Stomach (tissue), 19 donors: ENCODE measurements at regions of chr18 and their contacts with region 1.

Region 1: GRCh38 chr18:34661464-34662111 is 48.5 kb upstream of the DTNA start:
- DNase-seq: peak in 1 of 2 donors; percentile 61
- H3K4me3 ChIP-seq: no peak overlapping the region
- H3K27ac ChIP-seq: peak overlapping the region in 2 of 5 donors; percentile 4 to 74
- H3K4me1 ChIP-seq: peaks cover 4 to 26% (median 18%) of the 10 kb centered on the region in 4 donors
- H3K27me3 ChIP-seq: no peaks in the 10 kb centered on the region
- CTCF ChIP-seq: peak in 5 of 7 experiments; percentile 54 to 82 (median 60)
- EP300 ChIP-seq: no peak
- POLR2A ChIP-seq: no peak

Region 2: DNA sequence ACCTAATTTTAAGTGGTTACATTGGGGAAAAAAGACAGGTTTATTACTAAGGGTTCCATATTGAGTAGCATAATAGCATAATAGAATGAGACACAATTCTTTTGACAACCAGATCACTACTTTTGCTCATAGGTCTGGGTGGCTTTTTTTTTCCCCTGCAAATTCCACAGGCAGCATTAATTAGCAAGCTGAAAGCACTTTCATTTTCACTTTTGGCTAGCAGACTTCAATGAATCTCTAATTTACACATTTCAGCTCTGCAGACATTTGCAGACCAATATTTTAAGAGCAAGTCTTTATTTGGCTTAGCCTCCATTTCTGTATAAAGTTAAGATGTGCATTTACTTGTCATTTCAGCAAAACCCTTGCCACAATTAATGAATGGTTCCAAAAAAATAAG is 622.4 kb before region 1 on chr18:
- intact Hi-C with region 1: no loop called
- DNase-seq: peak in 1 of 2 donors; percentile 26
- H3K4me3 ChIP-seq: peak overlapping the region in 1 of 4 donors; percentile 9
- H3K27ac ChIP-seq: no peak overlapping the region
- H3K4me1 ChIP-seq: peaks cover 0 to 4% (median 0%) of the 10 kb centered on the region in 4 donors
- H3K27me3 ChIP-seq: no peaks in the 10 kb centered on the region
- CTCF ChIP-seq: no peak
- EP300 ChIP-seq: no peak
- POLR2A ChIP-seq: no peak

Region 3: GRCh38 chr18:34600118-34600517 is 61.5 kb before region 1 on chr18:
- intact Hi-C with region 1: no loop called
- DNase-seq: no peak
- H3K4me3 ChIP-seq: no peak overlapping the region
- H3K27ac ChIP-seq: no peak overlapping the region
- H3K4me1 ChIP-seq: peaks cover 0 to 5% (median 0%) of the 10 kb centered on the region in 4 donors
- H3K27me3 ChIP-seq: no peaks in the 10 kb centered on the region
- CTCF ChIP-seq: no peak
- EP300 ChIP-seq: no peak
- POLR2A ChIP-seq: no peak

Region 4: DNA sequence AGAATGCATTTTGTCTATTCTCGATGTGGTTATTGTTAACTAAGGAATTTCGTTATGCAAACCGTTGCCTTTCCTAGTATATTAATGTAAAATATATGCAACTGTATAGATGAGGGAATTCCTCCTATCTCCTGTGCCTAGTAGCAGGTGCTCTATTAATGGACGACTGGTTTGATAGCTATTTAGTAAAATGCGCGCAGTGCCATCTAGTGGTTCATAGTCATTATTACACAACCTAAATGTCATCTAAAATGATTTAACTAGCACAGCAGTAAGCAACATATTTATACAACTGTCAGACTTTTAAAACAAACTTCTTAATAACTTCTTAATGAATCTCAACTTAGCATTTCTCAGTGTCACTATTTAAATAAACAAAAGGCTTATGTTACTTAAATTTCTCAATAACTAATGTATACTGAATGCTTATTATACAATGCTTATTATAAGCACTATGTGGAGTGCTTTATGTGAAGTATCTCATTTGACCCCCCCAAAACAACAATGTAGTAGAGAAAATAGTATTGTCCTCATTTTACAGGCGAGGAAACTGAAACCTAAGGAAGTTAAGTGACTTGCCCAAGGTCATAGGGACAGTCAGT is 126.4 kb after region 1 on chr18:
- intact Hi-C with region 1: loop called (anchors 10 kb)
- DNase-seq: peak; percentile 41 to 84
- H3K4me3 ChIP-seq: no peak overlapping the region
- H3K27ac ChIP-seq: no peak overlapping the region
- H3K4me1 ChIP-seq: no peaks in the 10 kb centered on the region
- H3K27me3 ChIP-seq: no peaks in the 10 kb centered on the region
- CTCF ChIP-seq: peak in 5 of 7 experiments; percentile 58 to 76 (median 73)
- EP300 ChIP-seq: no peak
- POLR2A ChIP-seq: no peak